ENCODE measurements at regions of chr1 and their contacts with region 1.

Region 1: DNA sequence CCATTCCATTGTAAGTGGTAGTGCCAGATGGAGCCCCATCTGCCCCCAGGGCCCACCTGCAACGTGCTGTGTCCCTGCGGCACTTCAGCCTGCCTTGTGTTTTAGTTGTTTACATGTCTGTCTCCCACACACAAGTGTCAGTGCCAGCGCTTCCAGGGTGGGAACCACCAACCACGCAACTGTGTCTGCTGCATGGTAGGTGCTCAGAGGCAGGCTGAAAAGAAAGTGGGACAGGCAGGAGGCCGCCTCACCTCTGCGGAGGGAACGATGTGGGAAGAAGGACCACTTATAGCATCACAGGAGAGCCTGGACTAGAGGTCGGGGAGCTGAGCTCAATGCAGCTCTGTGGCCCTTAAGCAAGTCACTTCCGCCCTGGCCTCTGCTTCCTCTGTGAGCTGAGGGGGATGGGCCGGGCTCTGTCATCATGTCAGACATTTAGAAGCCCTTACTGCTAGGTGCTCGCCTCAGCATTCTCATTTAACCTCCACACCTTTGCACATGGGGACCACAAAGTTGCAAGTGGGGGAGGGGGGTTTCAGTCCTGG is 17.9 kb downstream of the SLC9A1 start:
- DNase-seq: peak; percentile 93
- ATAC-seq: peak; percentile 94
- H3K4me3 Mint-ChIP-seq: peak overlapping the region; percentile 73
- H3K27ac Mint-ChIP-seq: peak overlapping the region; percentile 99
- H3K4me1 Mint-ChIP-seq: peaks cover 36% of the 10 kb centered on the region
- H3K27me3 Mint-ChIP-seq: no peaks in the 10 kb centered on the region

Region 2: GRCh38 chr1:27102707-27103491 is 34.2 kb before region 1 on chr1:
- CTCF ChIA-PET with region 1: interaction called, 12 read pairs
- DNase-seq: peak; percentile 84
- ATAC-seq: peak; percentile 71
- H3K4me3 Mint-ChIP-seq: no peak overlapping the region
- H3K27ac Mint-ChIP-seq: no peak overlapping the region
- H3K4me1 Mint-ChIP-seq: peaks cover 18% of the 10 kb centered on the region
- H3K27me3 Mint-ChIP-seq: no peaks in the 10 kb centered on the region

Region 3: DNA sequence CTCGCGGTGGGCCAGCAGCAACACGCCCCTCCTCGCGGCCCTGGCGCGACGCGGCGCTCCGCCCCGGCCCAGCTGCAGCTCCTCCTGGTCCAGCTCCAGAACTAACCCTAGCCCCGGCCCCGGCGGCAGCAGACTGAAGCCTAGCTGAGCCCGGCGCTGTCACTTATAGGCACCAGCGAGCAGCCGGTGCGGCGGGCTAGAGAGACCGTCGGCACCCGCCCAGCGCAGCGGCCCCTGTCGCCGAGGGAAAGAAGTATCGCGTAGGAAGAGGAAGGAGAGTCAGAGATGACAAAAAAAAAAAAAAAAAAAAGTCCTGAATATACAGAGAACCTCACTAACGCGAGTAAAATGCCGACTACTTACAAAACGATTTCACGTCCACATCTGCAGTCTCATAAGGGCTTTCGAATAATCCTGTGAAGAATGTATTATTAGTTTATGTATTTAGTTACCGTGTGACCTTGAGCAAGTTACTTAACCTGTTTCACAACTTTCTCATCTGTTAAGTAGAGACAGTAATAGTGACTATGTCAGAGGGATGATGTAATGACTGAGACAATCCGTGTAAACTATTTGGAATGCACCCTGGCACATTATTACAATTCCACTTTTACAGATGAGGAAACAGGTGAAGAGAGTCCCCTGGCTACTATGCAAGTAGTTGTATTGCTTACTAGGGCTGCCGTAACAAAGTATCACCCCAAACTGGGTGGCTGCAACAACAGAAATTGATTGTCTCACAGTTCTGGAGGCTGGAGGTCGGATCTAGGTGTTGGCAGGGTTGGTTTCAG is 18.1 kb after region 1 on chr1 and contains the start of gene SLC9A1:
- CTCF ChIA-PET with region 1: interaction called, 36 read pairs
- DNase-seq: peak; percentile 94
- ATAC-seq: peak; percentile 89
- H3K4me3 Mint-ChIP-seq: peak within 1 kb of the TSS; percentile 91
- H3K27ac Mint-ChIP-seq: peak within 1 kb of the TSS; percentile 91
- H3K4me1 Mint-ChIP-seq: peaks cover 38% of the 10 kb centered on the region
- H3K27me3 Mint-ChIP-seq: no peaks in the 10 kb centered on the region
- total RNA-seq, gene SLC9A1: 25.8 to 26.3 TPM

Measured in activated CD8-positive, alpha-beta memory T cell treated with anti-CD3 and anti-CD28 coated beads, Interleukin-2, amount 10 ng/mL, durations not matched to agents 7 days and 5 days (primary cell).